ENCODE measurements at regions of chr4 and their contacts with region 1.

Region 1: DNA sequence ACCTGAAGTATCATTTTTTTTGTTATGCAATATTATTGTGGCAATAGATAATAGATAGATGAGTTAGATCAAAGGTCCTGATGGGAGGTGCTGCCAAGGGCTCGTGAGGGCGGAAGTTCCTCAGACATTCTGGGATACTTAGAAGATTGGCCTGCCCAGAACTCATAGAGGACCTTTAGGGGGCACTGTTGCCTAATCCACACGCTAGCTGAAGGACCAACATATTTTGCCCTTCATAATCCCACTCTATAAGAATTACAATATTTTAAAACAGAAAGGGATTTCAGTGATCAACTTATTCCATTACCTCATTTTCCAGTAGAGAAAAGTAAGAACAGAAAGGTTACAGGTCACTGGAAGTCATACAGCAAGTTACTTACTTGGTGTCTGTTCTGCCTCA is 22.9 kb upstream of the COX7B2 start:
- DNase-seq: no peak
- H3K4me3 ChIP-seq: no peak overlapping the region
- H3K27ac ChIP-seq: no peak overlapping the region
- H3K4me1 ChIP-seq: no peaks in the 10 kb centered on the region
- H3K27me3 ChIP-seq: no peaks in the 10 kb centered on the region
- CTCF ChIP-seq: peak; percentile 26 to 68 (median 60)
- EP300 ChIP-seq: no peak
- POLR2A ChIP-seq: no peak
- RAD21 ChIP-seq: peak; percentile 82

Region 2: DNA sequence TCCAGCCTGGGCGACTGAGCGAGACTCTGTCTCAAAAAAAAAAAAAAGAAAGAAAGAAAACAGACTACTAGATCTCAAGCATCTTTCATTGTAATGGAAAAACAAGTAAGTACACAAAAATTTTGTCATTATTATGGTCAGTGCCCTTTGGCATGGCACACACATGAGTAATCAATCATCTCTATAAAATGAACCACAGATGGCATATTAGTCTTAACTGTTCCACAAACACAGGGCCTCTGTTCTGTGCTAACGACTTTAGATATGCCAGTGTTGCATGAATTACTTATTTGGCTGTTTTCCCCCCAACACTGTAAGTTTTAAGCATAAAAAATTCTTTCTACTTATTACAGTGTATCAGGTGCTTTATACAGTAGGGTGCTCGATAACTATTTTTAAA is 113.4 kb before region 1 on chr4:
- CTCF ChIA-PET with region 1: no interaction called
- POLR2A ChIA-PET with region 1: no interaction called
- DNase-seq: no peak
- H3K4me3 ChIP-seq: no peak overlapping the region
- H3K27ac ChIP-seq: no peak overlapping the region
- H3K4me1 ChIP-seq: no peaks in the 10 kb centered on the region
- H3K27me3 ChIP-seq: no peaks in the 10 kb centered on the region
- CTCF ChIP-seq: no peak
- EP300 ChIP-seq: no peak
- POLR2A ChIP-seq: no peak
- RAD21 ChIP-seq: no peak

Region 3: GRCh38 chr4:46878641-46879040 is 53.3 kb before region 1 on chr4:
- CTCF ChIA-PET with region 1: no interaction called
- POLR2A ChIA-PET with region 1: no interaction called
- DNase-seq: no peak
- H3K4me3 ChIP-seq: no peak overlapping the region
- H3K27ac ChIP-seq: no peak overlapping the region
- H3K4me1 ChIP-seq: no peaks in the 10 kb centered on the region
- H3K27me3 ChIP-seq: no peaks in the 10 kb centered on the region
- CTCF ChIP-seq: no peak
- EP300 ChIP-seq: no peak
- POLR2A ChIP-seq: no peak
- RAD21 ChIP-seq: no peak

Region 4: GRCh38 chr4:46909078-46909477 is 22.9 kb before region 1 on chr4 and contains the start of gene COX7B2:
- CTCF ChIA-PET with region 1: no interaction called
- POLR2A ChIA-PET with region 1: no interaction called
- DNase-seq: no peak
- H3K4me3 ChIP-seq: no peak within 1 kb of the TSS
- H3K27ac ChIP-seq: no peak within 1 kb of the TSS
- H3K4me1 ChIP-seq: no peaks in the 10 kb centered on the region
- H3K27me3 ChIP-seq: no peaks in the 10 kb centered on the region
- CTCF ChIP-seq: no peak
- EP300 ChIP-seq: no peak
- POLR2A ChIP-seq: no peak
- RAD21 ChIP-seq: no peak
- total RNA-seq, gene COX7B2: not detected in 2 replicates

Region 5: GRCh38 chr4:47032415-47033106 is 100.6 kb after region 1 on chr4:
- CTCF ChIA-PET with region 1: interaction called, 11 read pairs
- POLR2A ChIA-PET with region 1: no interaction called
- DNase-seq: peak; percentile 59 to 89
- H3K4me3 ChIP-seq: peak overlapping the region; percentile 74 to 95 (median 80)
- H3K27ac ChIP-seq: no peak overlapping the region
- H3K4me1 ChIP-seq: peaks cover 0 to 6% (median 5%) of the 10 kb centered on the region in 4 experiments; a peak in 4 of 7 replicates
- H3K27me3 ChIP-seq: peaks cover 0 to 10% (median 8%) of the 10 kb centered on the region in 4 experiments; a peak in 5 of 7 replicates
- CTCF ChIP-seq: peak; percentile 80 to 94 (median 90)
- EP300 ChIP-seq: no peak
- POLR2A ChIP-seq: no peak
- RAD21 ChIP-seq: peak; percentile 83 to 84

Region 6: DNA sequence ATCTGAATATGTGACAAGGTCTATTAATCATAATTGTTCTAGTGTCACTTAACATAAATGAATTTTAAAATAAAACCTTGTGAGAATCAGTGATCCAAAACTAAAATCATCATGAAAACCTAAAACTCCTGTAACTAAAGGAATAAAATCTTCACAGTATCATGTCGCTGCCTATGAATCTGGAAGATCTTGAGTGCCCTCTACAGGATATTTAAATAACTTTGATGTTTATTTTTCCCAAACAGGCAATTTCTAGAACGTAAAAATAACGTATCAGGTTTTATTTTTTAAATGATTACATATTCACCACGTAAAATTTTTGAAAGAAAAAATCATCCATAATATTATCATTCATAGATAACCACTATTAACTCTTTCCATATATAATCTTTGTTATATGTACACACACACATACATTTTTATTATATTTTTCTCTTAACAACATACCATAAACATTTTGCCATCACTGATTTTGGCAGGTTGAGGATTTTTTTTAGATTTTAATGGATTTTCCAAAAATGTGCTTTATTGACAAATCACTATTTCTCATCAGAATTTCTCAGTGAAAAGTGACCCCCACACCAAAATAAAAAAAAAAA is 451.9 kb after region 1 on chr4:
- CTCF ChIA-PET with region 1: interaction called, 10 read pairs
- POLR2A ChIA-PET with region 1: no interaction called
- DNase-seq: no peak
- H3K4me3 ChIP-seq: no peak overlapping the region
- H3K27ac ChIP-seq: no peak overlapping the region
- H3K4me1 ChIP-seq: no peaks in the 10 kb centered on the region
- H3K27me3 ChIP-seq: no peaks in the 10 kb centered on the region
- CTCF ChIP-seq: peak in 2 of 3 experiments; percentile 18 to 30; a peak in 2 of 4 replicates
- EP300 ChIP-seq: no peak
- POLR2A ChIP-seq: no peak
- RAD21 ChIP-seq: peak; percentile 64 to 80

Measured in H1 (cell line).